ENCODE measurements at regions of chr3 and their contacts with region 1.

Region 1: DNA sequence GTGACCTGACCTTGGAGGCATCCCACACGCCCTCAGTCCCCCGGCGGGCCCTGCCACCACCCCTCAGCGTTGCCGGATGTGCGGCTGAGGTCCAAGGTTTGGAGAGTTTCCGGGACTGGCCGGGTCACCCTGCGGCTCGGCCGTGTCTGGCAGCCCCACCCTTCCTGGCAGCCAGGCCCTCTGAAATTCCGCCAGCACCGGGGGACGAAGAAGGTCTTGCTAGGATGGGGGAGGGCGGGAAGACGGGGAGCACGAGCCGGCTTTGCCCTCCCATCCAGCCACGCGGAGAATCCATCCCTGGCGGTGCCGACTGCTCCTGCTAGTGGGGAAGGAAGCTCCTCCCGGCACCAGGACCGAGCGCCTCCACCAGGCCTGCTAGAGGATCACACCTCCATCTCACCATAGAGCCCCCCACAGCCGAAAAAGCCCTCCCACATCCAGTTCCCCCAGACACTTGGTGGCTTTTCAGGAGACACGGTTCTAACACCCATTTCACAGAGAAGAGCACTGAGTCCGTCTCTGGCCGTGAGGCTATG is 81.5 kb downstream of the CPN2 start:
- DNase-seq: no peak
- H3K4me3 ChIP-seq: no peak overlapping the region
- H3K27ac ChIP-seq: no peak overlapping the region
- H3K27me3 ChIP-seq: peaks cover 8% of the 10 kb centered on the region
- CTCF ChIP-seq: peak; percentile 46

Region 2: GRCh38 chr3:194134757-194135528 is 134.7 kb before region 1 on chr3:
- CTCF ChIA-PET with region 1: interaction called, 14 read pairs
- POLR2A ChIA-PET with region 1: interaction called, 4 read pairs
- DNase-seq: peak; percentile 85
- H3K4me3 ChIP-seq: peak overlapping the region; percentile 61
- H3K27ac ChIP-seq: peak overlapping the region; percentile 95
- H3K27me3 ChIP-seq: peaks cover 28% of the 10 kb centered on the region
- CTCF ChIP-seq: no peak